ENCODE measurements at regions of chr6 and their contacts with region 1.

Region 1: DNA sequence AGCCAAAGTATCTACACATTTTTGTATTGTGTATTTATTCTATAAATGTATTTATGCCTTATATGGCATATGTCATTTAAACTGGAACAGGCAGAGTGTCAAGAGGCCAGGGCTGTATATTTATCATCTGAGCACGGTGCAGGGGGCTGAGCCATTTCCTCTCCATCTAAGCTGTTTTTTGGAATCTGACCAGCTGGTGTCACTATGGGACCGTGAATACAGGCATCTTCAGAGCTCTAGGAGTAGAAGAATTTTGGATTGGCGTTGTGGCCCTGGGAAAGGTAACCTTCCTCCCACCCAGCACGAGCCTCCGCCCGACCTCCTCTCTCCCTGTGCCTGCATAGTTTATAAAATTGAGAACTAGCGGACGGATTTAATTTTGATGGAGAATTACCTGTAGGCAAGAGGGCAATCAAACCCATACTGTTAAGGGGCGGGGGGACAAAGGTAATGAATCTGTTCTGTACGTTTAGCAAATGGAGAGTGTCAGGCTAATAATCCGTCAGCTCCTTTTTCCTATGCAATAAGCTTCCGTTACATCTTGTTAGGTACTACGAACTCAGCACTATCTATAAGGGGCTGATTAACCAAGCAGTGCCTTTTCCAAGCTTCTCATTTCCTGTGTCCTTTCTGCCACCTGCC is 29.0 kb upstream of the EEF1E1 start:
- DNase-seq: peak; percentile 12 to 42 (median 29)
- H3K4me3 ChIP-seq: no peak overlapping the region
- H3K4me3 Mint-ChIP-seq: no peak overlapping the region
- H3K27ac ChIP-seq: no peak overlapping the region
- H3K27ac Mint-ChIP-seq: no peak overlapping the region
- H3K4me1 ChIP-seq: peaks cover 0 to 9% of the 10 kb centered on the region in 2 donors
- H3K4me1 Mint-ChIP-seq: peaks cover 12% of the 10 kb centered on the region
- H3K27me3 ChIP-seq: no peaks in the 10 kb centered on the region
- H3K27me3 Mint-ChIP-seq: peaks cover 0 to 4% (median 3%) of the 10 kb centered on the region in 3 donors
- CTCF ChIP-seq: peak; percentile 61

Region 2: DNA sequence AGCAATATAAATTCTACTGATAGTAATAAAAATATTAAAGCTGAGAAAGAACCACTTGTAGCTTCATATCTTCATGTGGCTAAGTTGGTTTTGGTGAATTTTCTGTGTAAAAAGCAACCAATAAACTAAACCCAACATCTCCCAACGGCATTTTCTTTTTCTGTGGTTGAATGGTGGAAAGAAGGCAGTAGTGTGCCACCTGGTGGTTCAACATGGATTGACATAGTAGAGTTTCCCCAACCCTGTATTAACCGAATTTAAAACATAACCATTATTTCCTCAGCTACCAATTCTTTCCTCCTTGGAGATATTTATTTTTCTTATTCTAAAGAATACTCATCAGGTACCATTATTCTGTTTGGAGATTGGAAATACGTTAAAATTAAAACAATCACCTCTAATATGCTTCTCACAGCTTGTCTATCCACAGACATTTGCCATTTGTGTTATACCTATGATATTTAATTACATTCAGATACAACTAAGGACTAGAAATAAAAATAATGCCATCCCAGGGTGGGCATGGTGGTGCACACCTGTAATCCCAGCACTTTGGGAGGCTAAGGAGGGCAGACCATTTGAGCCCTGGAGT is 88.1 kb after region 1 on chr6:
- intact Hi-C with region 1: loop called (anchors 2 to 5 kb)
- DNase-seq: peak; percentile 16 to 49 (median 47)
- H3K4me3 ChIP-seq: no peak overlapping the region
- H3K4me3 Mint-ChIP-seq: no peak overlapping the region
- H3K27ac ChIP-seq: no peak overlapping the region
- H3K27ac Mint-ChIP-seq: no peak overlapping the region
- H3K4me1 ChIP-seq: no peaks in the 10 kb centered on the region
- H3K4me1 Mint-ChIP-seq: no peaks in the 10 kb centered on the region
- H3K27me3 ChIP-seq: no peaks in the 10 kb centered on the region
- H3K27me3 Mint-ChIP-seq: peaks cover 4 to 10% (median 5%) of the 10 kb centered on the region in 3 donors
- CTCF ChIP-seq: peak; percentile 77

Measured in CD14-positive monocyte (primary cell).